Thyroid gland (tissue), 4 donors: ENCODE measurements at regions of chr11 and their contacts with region 1.

Region 1: GRCh38 chr11:57527056-57527631 is 3.4 kb downstream of the TIMM10 start:
- DNase-seq: peak; percentile 78 to 82
- H3K4me3 ChIP-seq: no peak overlapping the region
- H3K27ac ChIP-seq: no peak overlapping the region
- H3K4me1 ChIP-seq: peaks cover 10 to 15% of the 10 kb centered on the region in 2 donors
- H3K27me3 ChIP-seq: no peaks in the 10 kb centered on the region
- CTCF ChIP-seq: peak; percentile 69 to 99 (median 92)
- POLR2A ChIP-seq: no peak

Region 2: DNA sequence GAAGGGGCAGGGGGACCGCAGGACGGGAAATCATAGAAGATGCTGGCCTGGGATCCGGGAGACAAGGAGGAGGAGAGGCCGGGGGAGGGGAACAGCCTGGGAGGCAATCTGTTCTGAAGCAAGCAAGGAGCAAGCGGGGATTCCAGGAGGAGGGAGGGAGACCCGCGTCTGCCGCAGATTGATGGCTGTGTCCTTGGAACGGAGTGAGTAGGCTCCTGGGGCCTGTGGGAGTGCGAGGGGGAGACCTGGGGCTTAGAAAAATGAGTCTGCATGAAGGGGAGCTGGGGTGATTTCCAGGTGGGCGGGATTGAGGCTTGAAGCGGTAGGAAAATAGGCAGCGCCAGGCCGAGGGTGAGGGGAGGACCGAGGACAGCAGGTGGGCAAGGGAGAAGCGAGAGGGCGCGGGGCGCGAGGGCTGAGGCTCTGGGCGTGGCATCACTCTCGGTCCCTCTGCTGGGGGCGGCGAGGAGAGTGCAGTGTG is 347.0 kb before region 1 on chr11:
- intact Hi-C with region 1: no loop called
- DNase-seq: no peak
- H3K4me3 ChIP-seq: no peak overlapping the region
- H3K27ac ChIP-seq: no peak overlapping the region
- H3K4me1 ChIP-seq: peaks cover 13 to 16% of the 10 kb centered on the region in 2 donors
- H3K27me3 ChIP-seq: no peaks in the 10 kb centered on the region
- CTCF ChIP-seq: no peak
- POLR2A ChIP-seq: no peak

Region 3: GRCh38 chr11:57456960-57457642 is 70.0 kb before region 1 on chr11:
- intact Hi-C with region 1: loop called (anchors 10 kb)
- DNase-seq: peak; percentile 92 to 93
- H3K4me3 ChIP-seq: no peak overlapping the region
- H3K27ac ChIP-seq: peak overlapping the region in 1 of 3 donors; percentile 53
- H3K4me1 ChIP-seq: peaks cover 41 to 59% of the 10 kb centered on the region in 2 donors
- H3K27me3 ChIP-seq: no peaks in the 10 kb centered on the region
- CTCF ChIP-seq: peak; percentile 90 to 100 (median 97)
- POLR2A ChIP-seq: peak in 1 of 2 donors; percentile 38

Region 4: DNA sequence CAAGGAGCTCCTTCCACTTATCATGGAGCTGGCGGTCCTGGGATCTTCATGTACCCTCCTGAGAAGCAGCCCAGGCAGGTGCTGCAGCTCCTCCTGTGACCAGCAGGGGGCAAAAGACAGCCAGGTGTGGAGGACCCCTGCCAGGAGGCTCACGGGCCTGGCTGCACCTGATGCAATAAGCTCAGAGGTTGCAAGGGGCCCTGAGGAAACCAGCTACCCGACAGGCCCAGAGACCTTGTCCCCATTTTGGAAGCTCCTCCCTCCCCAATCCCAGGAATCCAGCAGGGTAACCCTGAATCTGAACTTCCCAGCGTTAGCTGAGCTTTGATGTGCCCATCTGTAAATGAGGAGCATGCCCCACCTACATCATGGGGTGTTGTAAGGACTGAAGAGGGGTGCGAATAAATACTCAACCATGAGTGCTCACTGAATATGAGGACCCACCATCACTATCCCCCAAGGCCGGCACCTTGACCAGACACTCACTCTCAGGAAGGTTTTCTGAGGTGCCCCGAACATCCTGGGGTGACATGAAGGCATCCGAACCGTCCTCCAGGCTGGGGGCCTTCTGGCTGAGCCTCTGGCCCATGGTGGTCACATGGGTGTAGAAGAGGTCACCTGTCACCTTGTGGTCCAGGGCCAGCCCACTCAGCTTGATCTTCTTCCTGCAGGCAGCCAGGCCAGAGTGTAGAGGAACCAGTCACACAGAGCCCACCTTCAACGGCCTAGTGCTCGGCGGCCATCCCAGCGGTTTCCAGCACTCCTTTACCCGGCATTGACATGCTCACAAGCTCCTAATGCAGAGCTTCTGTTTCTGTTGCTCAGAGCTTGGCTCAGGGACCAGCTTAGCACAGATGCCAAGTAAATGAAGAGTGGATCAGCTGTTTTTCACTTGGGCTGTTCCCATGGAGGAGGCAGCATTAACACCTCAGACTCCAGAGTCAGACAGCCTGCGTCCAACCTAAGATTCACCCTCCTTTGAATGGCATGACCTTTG is 33.3 kb before region 1 on chr11:
- intact Hi-C with region 1: loop called (anchors 2 kb)
- DNase-seq: peak; percentile 81 to 85
- H3K4me3 ChIP-seq: no peak overlapping the region
- H3K27ac ChIP-seq: no peak overlapping the region
- H3K4me1 ChIP-seq: peaks cover 0 to 4% of the 10 kb centered on the region in 2 donors
- H3K27me3 ChIP-seq: no peaks in the 10 kb centered on the region
- CTCF ChIP-seq: peak; percentile 75 to 92 (median 86)
- POLR2A ChIP-seq: no peak